ENCODE measurements at regions of chr3 and their contacts with region 1.

Region 1: GRCh38 chr3:194486540-194487288 is at the start of gene ATP13A3:
- DNase-seq: peak; percentile 92 to 94 (median 92)
- H3K4me3 ChIP-seq: peak within 1 kb of the TSS; percentile 67 to 90
- H3K4me3 Mint-ChIP-seq: peak within 1 kb of the TSS; percentile 93 to 98 (median 94)
- H3K27ac ChIP-seq: peak within 1 kb of the TSS; percentile 75
- H3K27ac Mint-ChIP-seq: peak within 1 kb of the TSS; percentile 90 to 98 (median 95)
- H3K4me1 ChIP-seq: peaks cover 41% of the 10 kb centered on the region
- H3K4me1 Mint-ChIP-seq: peaks cover 27 to 52% (median 40%) of the 10 kb centered on the region in 4 donors
- H3K27me3 ChIP-seq: no peaks in the 10 kb centered on the region
- H3K27me3 Mint-ChIP-seq: no peaks in the 10 kb centered on the region
- total RNA-seq, gene ATP13A3: 57.6 to 62.7 TPM

Region 2: GRCh38 chr3:194583604-194584318 is 97.0 kb after region 1 on chr3:
- CTCF ChIA-PET with region 1: interaction called, 5 read pairs
- POLR2A ChIA-PET with region 1: interaction called, 15 read pairs
- intact Hi-C with region 1: loop called (anchors 1 kb)
- DNase-seq: peak; percentile 90 to 94 (median 94)
- H3K4me3 ChIP-seq: peak overlapping the region; percentile 71 to 76
- H3K4me3 Mint-ChIP-seq: peak overlapping the region; percentile 93 to 97 (median 94)
- H3K27ac ChIP-seq: peak overlapping the region; percentile 83
- H3K27ac Mint-ChIP-seq: peak overlapping the region; percentile 92 to 99 (median 97)
- H3K4me1 ChIP-seq: peaks cover 16% of the 10 kb centered on the region
- H3K4me1 Mint-ChIP-seq: peaks cover 7 to 21% (median 13%) of the 10 kb centered on the region in 4 donors
- H3K27me3 ChIP-seq: no peaks in the 10 kb centered on the region
- H3K27me3 Mint-ChIP-seq: no peaks in the 10 kb centered on the region

Region 3: DNA sequence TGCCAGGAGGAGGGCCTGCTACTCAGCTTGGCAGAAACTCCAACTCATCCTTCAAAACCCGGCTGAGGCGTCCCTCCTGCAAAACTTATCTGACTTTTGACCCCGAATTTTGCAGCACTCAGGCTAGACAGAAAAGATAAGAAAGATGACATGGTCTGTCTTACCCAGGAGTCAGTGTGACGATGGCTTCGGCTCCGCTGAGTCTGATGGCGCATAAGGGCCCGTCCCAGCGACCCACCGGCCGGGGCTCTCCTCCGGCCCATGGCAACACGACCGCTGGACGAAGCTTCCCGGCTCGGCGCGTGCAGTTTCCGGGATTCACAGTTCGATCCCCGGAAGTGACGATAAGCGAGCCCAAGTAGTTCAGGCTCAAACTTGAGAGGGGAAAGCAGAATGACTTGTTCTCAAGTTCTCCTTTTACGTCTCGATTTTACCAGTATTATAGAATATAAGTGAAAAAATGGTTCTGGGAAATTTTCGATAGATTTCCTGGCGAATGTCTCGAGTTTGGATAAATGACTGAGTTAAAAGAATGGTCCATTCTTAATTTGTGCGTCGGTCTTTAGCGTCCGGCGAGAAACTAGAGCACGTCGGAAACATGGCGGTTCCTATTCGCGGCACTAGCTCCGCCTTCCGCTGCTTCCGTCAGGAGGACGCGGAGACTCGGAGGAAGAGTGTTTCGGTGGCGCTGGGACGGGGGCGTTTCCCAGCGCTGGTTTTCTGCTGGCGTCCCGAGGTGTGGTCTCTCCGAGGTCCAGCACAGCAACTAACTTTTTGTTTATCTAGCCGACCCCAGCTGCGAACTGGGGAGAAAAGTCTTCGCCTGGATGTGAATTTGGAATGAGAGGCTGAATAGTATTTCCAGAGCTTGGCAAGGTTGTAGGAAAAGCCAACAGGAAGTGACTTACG is 185.4 kb after region 1 on chr3 and contains the start of gene LSG1:
- CTCF ChIA-PET with region 1: no interaction called
- POLR2A ChIA-PET with region 1: interaction called, 3 read pairs
- intact Hi-C with region 1: loop called (anchors 5 kb)
- DNase-seq: peak; percentile 87 to 90 (median 89)
- H3K4me3 ChIP-seq: peak within 1 kb of the TSS; percentile 85 to 88
- H3K4me3 Mint-ChIP-seq: peak within 1 kb of the TSS; percentile 97 to 100 (median 99)
- H3K27ac ChIP-seq: peak within 1 kb of the TSS; percentile 95
- H3K27ac Mint-ChIP-seq: peak within 1 kb of the TSS; percentile 98 to 99 (median 99)
- H3K4me1 ChIP-seq: peaks cover 32% of the 10 kb centered on the region
- H3K4me1 Mint-ChIP-seq: peaks cover 26 to 52% (median 38%) of the 10 kb centered on the region in 4 donors
- H3K27me3 ChIP-seq: no peaks in the 10 kb centered on the region
- H3K27me3 Mint-ChIP-seq: peaks cover 0 to 4% of the 10 kb centered on the region in 2 donors
- total RNA-seq, gene LSG1: 48.4 to 49.5 TPM

Region 4: DNA sequence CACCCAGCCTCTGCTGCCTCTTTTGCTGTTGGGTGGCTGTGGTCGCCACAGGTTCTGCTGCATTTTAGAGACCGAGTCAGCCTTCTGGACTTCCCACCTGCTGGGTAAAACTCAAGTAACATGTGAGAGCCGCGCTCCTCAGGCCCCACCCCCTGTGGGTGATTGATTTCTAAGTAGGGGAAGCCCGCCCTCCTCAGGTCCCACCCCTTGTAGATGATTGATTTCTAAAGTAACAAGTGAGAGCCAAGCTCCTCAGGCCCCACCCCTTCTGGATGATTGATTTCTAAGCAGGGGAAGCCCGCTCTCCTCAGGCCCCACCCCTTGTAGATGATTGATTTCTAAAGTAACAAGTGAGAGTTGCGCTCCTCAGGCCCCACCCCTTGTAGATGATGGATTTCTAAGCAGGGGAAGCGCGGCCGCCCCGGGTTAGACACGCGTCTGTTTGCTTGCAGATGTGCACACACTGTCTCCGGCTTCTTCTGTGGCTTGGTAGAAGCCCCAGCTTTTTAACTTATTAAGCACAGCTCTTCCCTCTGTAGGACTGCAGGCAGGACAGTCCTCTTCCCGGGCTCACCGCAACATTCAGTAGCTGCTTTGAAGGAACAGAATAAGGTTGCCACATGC is 282.4 kb after region 1 on chr3:
- CTCF ChIA-PET with region 1: no interaction called
- POLR2A ChIA-PET with region 1: interaction called, 3 read pairs
- intact Hi-C with region 1: loop called (anchors 5 kb)
- DNase-seq: peak; percentile 91 to 98 (median 94)
- H3K4me3 ChIP-seq: peak overlapping the region; percentile 33 to 54
- H3K4me3 Mint-ChIP-seq: peak overlapping the region; percentile 86 to 96 (median 87)
- H3K27ac ChIP-seq: peak overlapping the region; percentile 73
- H3K27ac Mint-ChIP-seq: peak overlapping the region; percentile 82 to 98 (median 95)
- H3K4me1 ChIP-seq: peaks cover 15% of the 10 kb centered on the region
- H3K4me1 Mint-ChIP-seq: peaks cover 5 to 30% (median 17%) of the 10 kb centered on the region in 4 donors
- H3K27me3 ChIP-seq: no peaks in the 10 kb centered on the region
- H3K27me3 Mint-ChIP-seq: peaks cover 8 to 11% of the 10 kb centered on the region in 2 donors

Measured in CD4-positive, alpha-beta memory T cell (primary cell).